Transverse colon (tissue), 4 donors: ENCODE measurements at regions of chr4 and their contacts with region 1.

Region 1: GRCh38 chr4:127880764-127881562 is at the start of gene PLK4:
- DNase-seq: peak; percentile 97
- H3K4me3 ChIP-seq: peak within 1 kb of the TSS; percentile 62 to 86 (median 84)
- H3K27ac ChIP-seq: peak within 1 kb of the TSS; percentile 77 to 91 (median 84)
- H3K4me1 ChIP-seq: peaks cover 5 to 20% (median 11%) of the 10 kb centered on the region in 4 donors
- H3K27me3 ChIP-seq: no peaks in the 10 kb centered on the region
- CTCF ChIP-seq: no peak
- EP300 ChIP-seq: no peak
- POLR2A ChIP-seq: no peak
- total RNA-seq, gene PLK4: 1.4 to 27.3 (median 2.3) TPM in 3 of 4 donors, not detected in the other

Region 2: DNA sequence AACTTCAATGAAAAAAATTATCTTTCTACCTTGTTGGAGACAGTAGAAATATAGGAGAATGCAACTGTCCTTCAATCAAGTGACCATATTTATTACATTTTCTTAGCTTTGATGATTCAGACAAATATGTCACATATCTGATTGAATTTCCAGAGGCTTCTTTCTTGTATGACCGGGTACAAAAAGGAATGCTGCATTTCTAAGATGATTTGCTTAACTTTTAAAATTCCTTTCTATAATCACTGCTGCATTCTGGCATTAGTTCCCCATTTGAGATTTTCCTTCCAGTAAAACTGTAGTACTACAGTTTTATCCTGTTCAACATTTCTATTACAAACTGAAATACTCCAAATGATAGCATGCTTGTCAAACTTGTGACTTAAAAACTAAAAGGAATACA is 78.8 kb after region 1 on chr4:
- in situ Hi-C with region 1: loop called in 1 of 4 experiments (anchors 10 kb)
- intact Hi-C with region 1: no loop called
- DNase-seq: no peak
- H3K4me3 ChIP-seq: no peak overlapping the region
- H3K27ac ChIP-seq: no peak overlapping the region
- H3K4me1 ChIP-seq: peaks cover 0 to 9% (median 1%) of the 10 kb centered on the region in 4 donors
- H3K27me3 ChIP-seq: no peaks in the 10 kb centered on the region
- CTCF ChIP-seq: no peak
- EP300 ChIP-seq: no peak
- POLR2A ChIP-seq: no peak